Endothelial cell of umbilical vein (primary cell): ENCODE measurements at regions of chr7 and their contacts with region 1.

Region 1: GRCh38 chr7:90595801-90596671 is at the start of gene CDK14:
- DNase-seq: peak; percentile 68
- H3K4me3 ChIP-seq: peak within 1 kb of the TSS; percentile 81 to 95 (median 94)
- H3K27ac ChIP-seq: peak within 1 kb of the TSS; percentile 80
- H3K4me1 ChIP-seq: peaks cover 46% of the 10 kb centered on the region
- H3K27me3 ChIP-seq: no peaks in the 10 kb centered on the region
- CTCF ChIP-seq: peak; percentile 25 to 54
- POLR2A ChIP-seq: no peak
- total RNA-seq, gene CDK14: 34.2 and 41.5 TPM in 2 replicates

Region 2: GRCh38 chr7:90613088-90613498 is 17.1 kb after region 1 on chr7:
- CTCF ChIA-PET with region 1: interaction called, 11 read pairs
- POLR2A ChIA-PET with region 1: no interaction called
- dilution Hi-C with region 1: no loop called
- intact Hi-C with region 1: loop called (anchors 2 kb)
- DNase-seq: peak; percentile 61
- H3K4me3 ChIP-seq: no peak overlapping the region
- H3K27ac ChIP-seq: peak overlapping the region; percentile 15
- H3K4me1 ChIP-seq: peaks cover 11% of the 10 kb centered on the region
- H3K27me3 ChIP-seq: no peaks in the 10 kb centered on the region
- CTCF ChIP-seq: no peak
- POLR2A ChIP-seq: no peak

Region 3: GRCh38 chr7:90655566-90655965 is 59.5 kb after region 1 on chr7:
- CTCF ChIA-PET with region 1: no interaction called
- POLR2A ChIA-PET with region 1: no interaction called
- dilution Hi-C with region 1: no loop called
- intact Hi-C with region 1: loop called (anchors 1 kb)
- DNase-seq: peak; percentile 85
- H3K4me3 ChIP-seq: no peak overlapping the region
- H3K27ac ChIP-seq: peak overlapping the region; percentile 44
- H3K4me1 ChIP-seq: peaks cover 22% of the 10 kb centered on the region
- H3K27me3 ChIP-seq: no peaks in the 10 kb centered on the region
- CTCF ChIP-seq: no peak
- POLR2A ChIP-seq: no peak

Region 4: DNA sequence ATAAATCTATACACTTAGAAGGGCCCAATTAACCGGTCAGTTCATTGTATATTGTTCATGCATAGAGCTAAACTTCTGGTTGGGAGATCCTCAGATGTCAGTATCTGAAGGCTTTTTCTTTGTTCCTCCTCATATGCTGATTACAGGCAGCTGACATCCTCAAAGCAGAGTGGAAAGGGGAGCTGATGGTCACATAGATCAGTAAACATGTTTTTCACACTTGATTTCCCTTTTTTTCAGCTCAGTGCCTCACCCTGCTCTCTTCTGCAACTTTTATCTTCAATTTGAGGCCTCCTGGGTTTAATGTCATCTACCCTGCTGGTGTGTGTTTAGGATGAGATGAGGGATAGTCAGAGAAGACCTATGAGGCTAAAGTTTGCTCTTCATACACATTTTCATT is 370.3 kb after region 1 on chr7:
- CTCF ChIA-PET with region 1: no interaction called
- POLR2A ChIA-PET with region 1: no interaction called
- dilution Hi-C with region 1: no loop called
- intact Hi-C with region 1: no loop called
- DNase-seq: no peak
- H3K4me3 ChIP-seq: no peak overlapping the region
- H3K27ac ChIP-seq: no peak overlapping the region
- H3K4me1 ChIP-seq: no peaks in the 10 kb centered on the region
- H3K27me3 ChIP-seq: no peaks in the 10 kb centered on the region
- CTCF ChIP-seq: no peak
- POLR2A ChIP-seq: no peak

Region 5: DNA sequence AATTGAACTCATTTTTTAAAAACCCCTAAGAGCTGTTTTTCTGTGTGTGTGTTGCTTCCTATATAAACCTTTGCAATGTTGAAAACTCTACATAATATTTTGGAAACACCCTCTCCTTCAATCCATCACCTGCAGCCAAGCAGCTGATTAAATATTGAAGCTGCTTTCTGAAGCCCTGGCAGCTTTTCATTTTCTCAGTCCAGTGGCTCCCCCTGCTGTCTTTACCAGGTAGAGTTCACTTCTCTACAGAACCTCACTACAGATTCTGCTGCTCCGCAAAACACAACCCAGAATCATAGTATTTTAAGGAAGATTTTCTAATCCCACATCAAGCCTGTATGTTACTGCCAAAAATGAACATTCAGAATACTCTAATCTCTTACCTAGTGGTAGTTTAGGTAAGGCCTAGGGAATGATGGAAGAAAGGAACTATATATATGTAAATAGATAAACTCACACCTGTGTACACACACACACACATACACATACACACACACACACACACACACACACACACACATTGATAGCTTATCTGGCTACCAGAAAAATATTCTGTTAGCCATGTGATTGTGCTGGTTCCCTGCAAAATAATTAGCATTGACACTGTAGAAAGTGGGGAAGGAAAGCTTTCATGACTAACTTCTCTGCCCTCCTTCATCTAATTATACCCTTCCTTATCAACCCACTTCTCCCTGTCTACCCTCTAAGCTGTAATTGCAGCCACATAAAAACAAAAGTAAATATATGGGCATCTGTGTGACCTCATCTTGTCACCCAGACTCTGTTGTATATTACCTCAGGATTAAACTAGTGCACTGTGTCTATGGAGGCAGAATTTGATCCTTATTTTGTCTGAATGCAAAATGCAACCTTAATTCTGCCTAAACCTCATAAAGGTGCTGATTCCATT is 438.7 kb after region 1 on chr7:
- CTCF ChIA-PET with region 1: interaction called, 21 read pairs
- POLR2A ChIA-PET with region 1: no interaction called
- dilution Hi-C with region 1: no loop called
- intact Hi-C with region 1: loop called (anchors 2 kb)
- DNase-seq: peak; percentile 56
- H3K4me3 ChIP-seq: no peak overlapping the region
- H3K27ac ChIP-seq: no peak overlapping the region
- H3K4me1 ChIP-seq: no peaks in the 10 kb centered on the region
- H3K27me3 ChIP-seq: no peaks in the 10 kb centered on the region
- CTCF ChIP-seq: peak; percentile 35 to 61
- POLR2A ChIP-seq: no peak